OCI-LY7 (cell line): ENCODE measurements at regions of chr3 and their contacts with region 1.

Region 1: DNA sequence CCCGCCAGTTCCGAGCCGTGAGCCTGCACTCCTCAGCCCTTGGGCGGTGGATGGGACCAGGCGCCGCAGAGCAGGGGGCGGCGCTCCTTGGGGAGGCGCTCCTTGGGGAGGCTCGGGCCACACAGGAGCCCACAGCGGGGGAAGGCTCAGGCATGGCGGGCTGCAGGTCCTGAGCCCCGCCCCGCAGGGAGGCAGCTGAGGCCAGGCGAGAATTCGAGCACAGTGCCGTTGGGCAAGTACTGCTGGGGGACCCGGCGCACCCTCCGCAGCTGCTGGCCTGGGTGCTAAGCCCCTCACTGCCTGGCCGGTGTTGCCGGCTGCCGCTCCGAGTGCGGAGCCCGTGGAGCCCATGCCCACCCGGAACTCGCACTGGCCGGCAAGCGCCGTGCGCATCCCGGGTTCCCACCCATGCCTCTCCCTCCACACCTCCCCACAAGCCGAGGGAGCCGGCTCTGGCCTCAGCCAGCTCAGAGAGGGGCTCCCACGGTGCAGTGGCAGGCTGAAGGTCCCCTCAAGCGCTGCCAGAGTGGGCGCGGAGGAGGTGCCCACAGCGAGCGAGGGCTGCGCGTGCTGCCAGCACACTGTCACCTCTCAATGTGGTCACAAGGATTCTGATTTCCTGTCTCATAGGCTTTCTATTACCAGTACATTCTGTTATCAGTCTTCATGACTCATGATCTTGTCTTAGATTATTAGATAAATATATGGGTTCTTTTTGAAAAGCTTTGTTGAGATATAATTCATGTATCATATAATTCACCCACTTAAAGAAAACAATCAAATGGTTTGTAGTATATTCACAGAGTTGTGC is 44.0 kb upstream of the LRIG1 start:
- DNase-seq: no peak
- H3K4me3 ChIP-seq: no peak overlapping the region
- H3K27ac ChIP-seq: no peak overlapping the region
- H3K4me1 ChIP-seq: peaks cover 4% of the 10 kb centered on the region
- CTCF ChIP-seq: no peak

Region 2: GRCh38 chr3:66567077-66567476 is 22.3 kb after region 1 on chr3:
- CTCF ChIA-PET with region 1: interaction called, 11 read pairs
- POLR2A ChIA-PET with region 1: no interaction called
- intact Hi-C with region 1: no loop called
- DNase-seq: no peak
- H3K4me3 ChIP-seq: no peak overlapping the region
- H3K27ac ChIP-seq: no peak overlapping the region
- H3K4me1 ChIP-seq: no peaks in the 10 kb centered on the region
- CTCF ChIP-seq: no peak

Region 3: DNA sequence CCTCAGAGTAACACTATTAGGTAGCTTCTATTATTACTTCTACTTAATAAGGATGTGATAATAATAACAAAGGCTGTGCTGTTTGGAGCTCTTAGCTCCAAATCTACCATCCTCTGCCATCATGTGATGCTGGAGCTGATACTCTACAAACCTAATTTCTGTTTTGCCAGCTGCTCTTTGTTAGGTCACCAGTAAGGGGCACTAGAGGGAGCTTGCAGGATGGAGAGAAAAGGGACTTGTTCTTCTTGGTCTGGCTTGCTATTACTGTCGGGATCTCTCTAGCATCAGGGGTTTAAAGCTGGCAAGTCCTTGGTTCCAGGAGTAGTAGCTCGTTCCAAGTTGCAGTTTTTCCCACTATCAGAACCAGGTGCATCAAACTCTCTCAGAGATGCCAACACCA is 258.4 kb after region 1 on chr3:
- CTCF ChIA-PET with region 1: no interaction called
- POLR2A ChIA-PET with region 1: no interaction called
- intact Hi-C with region 1: no loop called
- DNase-seq: no peak
- H3K4me3 ChIP-seq: no peak overlapping the region
- H3K27ac ChIP-seq: no peak overlapping the region
- H3K4me1 ChIP-seq: no peaks in the 10 kb centered on the region
- CTCF ChIP-seq: peak; percentile 34; the same call in 1 of the 2 replicates